ENCODE measurements at regions of chr17 and their contacts with region 1.

Region 1: DNA sequence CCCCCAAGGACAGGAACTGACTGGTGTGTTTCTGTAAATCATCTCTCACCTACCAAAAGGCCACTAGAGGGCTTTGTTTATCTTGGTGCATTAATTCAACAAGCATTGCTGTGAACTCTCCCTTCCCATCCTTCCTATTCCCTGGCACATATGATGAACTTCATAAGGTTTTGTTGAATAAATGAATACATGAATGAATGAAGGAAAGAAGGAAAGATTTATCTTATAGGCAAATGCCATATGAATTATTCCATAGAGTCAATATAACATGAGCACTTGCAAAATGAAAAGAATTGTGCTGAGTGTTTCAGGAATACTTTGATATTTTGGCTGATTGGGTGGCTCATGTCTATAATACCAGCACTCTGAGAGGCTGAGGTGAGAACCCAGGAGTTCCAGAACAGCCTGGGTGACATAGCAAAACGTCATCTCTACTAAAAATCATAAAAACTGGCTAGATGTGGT is 4.3 kb downstream of the SPDYE4 start:
- DNase-seq: no peak
- H3K4me3 ChIP-seq: no peak overlapping the region
- H3K4me3 Mint-ChIP-seq: no peak overlapping the region
- H3K27ac ChIP-seq: no peak overlapping the region
- H3K27ac Mint-ChIP-seq: no peak overlapping the region
- H3K4me1 ChIP-seq: no peaks in the 10 kb centered on the region
- H3K4me1 Mint-ChIP-seq: no peaks in the 10 kb centered on the region
- H3K27me3 ChIP-seq: no peaks in the 10 kb centered on the region
- H3K27me3 Mint-ChIP-seq: peaks cover 8 to 16% of the 10 kb centered on the region in 2 donors

Region 2: GRCh38 chr17:8894673-8895578 is 140.9 kb after region 1 on chr17:
- CTCF ChIA-PET with region 1: no interaction called
- POLR2A ChIA-PET with region 1: no interaction called
- intact Hi-C with region 1: loop called (anchors 1 kb)
- DNase-seq: peak in 4 of 5 donors; percentile 45 to 46 (median 46)
- H3K4me3 ChIP-seq: no peak overlapping the region
- H3K4me3 Mint-ChIP-seq: peak overlapping the region in 7 of 8 donors; percentile 12 to 44 (median 33)
- H3K27ac ChIP-seq: no peak overlapping the region
- H3K27ac Mint-ChIP-seq: peak overlapping the region; percentile 56 to 98 (median 92)
- H3K4me1 ChIP-seq: peaks cover 61% of the 10 kb centered on the region
- H3K4me1 Mint-ChIP-seq: peaks cover 51 to 68% (median 58%) of the 10 kb centered on the region in 4 donors
- H3K27me3 ChIP-seq: no peaks in the 10 kb centered on the region
- H3K27me3 Mint-ChIP-seq: no peaks in the 10 kb centered on the region

Measured in CD4-positive, alpha-beta memory T cell (primary cell).